ENCODE measurements at regions of chr11 and their contacts with region 1.

Region 1: DNA sequence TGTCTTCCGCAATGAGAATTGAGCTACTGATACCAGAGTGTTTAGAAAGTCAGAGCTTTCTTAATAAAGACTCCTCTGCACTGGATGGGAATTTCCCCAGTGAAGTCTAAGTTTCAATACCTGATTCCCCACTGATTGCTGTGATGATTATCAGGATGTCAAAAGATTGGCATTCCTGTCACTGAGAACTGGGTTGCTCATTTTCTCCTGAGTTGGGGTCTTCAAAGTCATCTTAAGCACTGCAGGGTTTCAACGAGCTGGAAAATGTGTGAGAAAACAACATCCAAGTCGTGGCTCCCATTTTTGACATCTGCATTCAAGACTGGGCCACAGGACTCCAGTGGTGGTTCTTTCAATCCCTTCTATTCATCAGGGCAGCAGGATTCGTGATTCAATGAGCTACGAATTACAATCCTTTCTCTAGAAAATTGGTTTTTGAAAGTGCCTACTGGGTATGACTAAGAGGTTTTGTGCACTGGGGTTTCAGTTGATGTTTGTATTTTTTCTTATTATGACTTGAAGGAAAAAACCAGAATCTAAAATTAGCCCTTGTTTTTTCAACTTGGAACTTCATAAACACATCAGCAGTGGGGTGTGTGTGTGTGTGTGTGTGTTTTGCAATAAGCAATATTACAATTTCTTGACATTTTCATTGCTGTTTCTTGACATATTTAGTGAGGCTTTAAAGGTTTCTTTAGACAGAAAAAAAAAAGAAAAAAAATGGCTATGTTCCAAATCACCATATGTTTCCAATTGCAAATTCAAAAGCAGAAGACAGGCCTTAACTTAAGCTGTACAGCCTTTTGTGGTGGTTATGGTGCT is 233.0 kb downstream of the FAM76B start:
- DNase-seq: peak; percentile 60
- ATAC-seq: peak; percentile 94
- H3K4me3 Mint-ChIP-seq: peak overlapping the region; percentile 17
- H3K27ac Mint-ChIP-seq: peak overlapping the region; percentile 90
- H3K4me1 Mint-ChIP-seq: peaks cover 23% of the 10 kb centered on the region
- H3K27me3 Mint-ChIP-seq: no peaks in the 10 kb centered on the region

Region 2: GRCh38 chr11:95499516-95500135 is 56.9 kb before region 1 on chr11:
- CTCF ChIA-PET with region 1: no interaction called
- POLR2A ChIA-PET with region 1: no interaction called
- intact Hi-C with region 1: no loop called
- DNase-seq: no peak
- ATAC-seq: no peak
- H3K4me3 Mint-ChIP-seq: no peak overlapping the region
- H3K27ac Mint-ChIP-seq: no peak overlapping the region
- H3K4me1 Mint-ChIP-seq: peaks cover 7% of the 10 kb centered on the region
- H3K27me3 Mint-ChIP-seq: no peaks in the 10 kb centered on the region

Region 3: GRCh38 chr11:95544095-95544856 is 12.3 kb before region 1 on chr11:
- CTCF ChIA-PET with region 1: interaction called, 6 read pairs
- POLR2A ChIA-PET with region 1: interaction called, 8 read pairs
- intact Hi-C with region 1: loop called in 1 of 2 experiments (anchors 1 kb)
- DNase-seq: no peak
- ATAC-seq: peak; percentile 92
- H3K4me3 Mint-ChIP-seq: no peak overlapping the region
- H3K27ac Mint-ChIP-seq: no peak overlapping the region
- H3K4me1 Mint-ChIP-seq: peaks cover 20% of the 10 kb centered on the region
- H3K27me3 Mint-ChIP-seq: no peaks in the 10 kb centered on the region

Region 4: GRCh38 chr11:95584589-95584988 is 28.0 kb after region 1 on chr11:
- CTCF ChIA-PET with region 1: interaction called, 4 read pairs
- POLR2A ChIA-PET with region 1: no interaction called
- intact Hi-C with region 1: loop called (anchors 1 to 2 kb)
- DNase-seq: no peak
- ATAC-seq: peak; percentile 32
- H3K4me3 Mint-ChIP-seq: no peak overlapping the region
- H3K27ac Mint-ChIP-seq: no peak overlapping the region
- H3K4me1 Mint-ChIP-seq: peaks cover 17% of the 10 kb centered on the region
- H3K27me3 Mint-ChIP-seq: no peaks in the 10 kb centered on the region

Region 5: GRCh38 chr11:95688580-95689189 is 132.1 kb after region 1 on chr11:
- CTCF ChIA-PET with region 1: no interaction called
- POLR2A ChIA-PET with region 1: interaction called, 3 read pairs
- intact Hi-C with region 1: loop called (anchors 1 kb)
- DNase-seq: no peak
- ATAC-seq: peak; percentile 77
- H3K4me3 Mint-ChIP-seq: peak overlapping the region; percentile 9
- H3K27ac Mint-ChIP-seq: no peak overlapping the region
- H3K4me1 Mint-ChIP-seq: peaks cover 24% of the 10 kb centered on the region
- H3K27me3 Mint-ChIP-seq: no peaks in the 10 kb centered on the region